ENCODE measurements at regions of chr2 and their contacts with region 1.

Region 1: DNA sequence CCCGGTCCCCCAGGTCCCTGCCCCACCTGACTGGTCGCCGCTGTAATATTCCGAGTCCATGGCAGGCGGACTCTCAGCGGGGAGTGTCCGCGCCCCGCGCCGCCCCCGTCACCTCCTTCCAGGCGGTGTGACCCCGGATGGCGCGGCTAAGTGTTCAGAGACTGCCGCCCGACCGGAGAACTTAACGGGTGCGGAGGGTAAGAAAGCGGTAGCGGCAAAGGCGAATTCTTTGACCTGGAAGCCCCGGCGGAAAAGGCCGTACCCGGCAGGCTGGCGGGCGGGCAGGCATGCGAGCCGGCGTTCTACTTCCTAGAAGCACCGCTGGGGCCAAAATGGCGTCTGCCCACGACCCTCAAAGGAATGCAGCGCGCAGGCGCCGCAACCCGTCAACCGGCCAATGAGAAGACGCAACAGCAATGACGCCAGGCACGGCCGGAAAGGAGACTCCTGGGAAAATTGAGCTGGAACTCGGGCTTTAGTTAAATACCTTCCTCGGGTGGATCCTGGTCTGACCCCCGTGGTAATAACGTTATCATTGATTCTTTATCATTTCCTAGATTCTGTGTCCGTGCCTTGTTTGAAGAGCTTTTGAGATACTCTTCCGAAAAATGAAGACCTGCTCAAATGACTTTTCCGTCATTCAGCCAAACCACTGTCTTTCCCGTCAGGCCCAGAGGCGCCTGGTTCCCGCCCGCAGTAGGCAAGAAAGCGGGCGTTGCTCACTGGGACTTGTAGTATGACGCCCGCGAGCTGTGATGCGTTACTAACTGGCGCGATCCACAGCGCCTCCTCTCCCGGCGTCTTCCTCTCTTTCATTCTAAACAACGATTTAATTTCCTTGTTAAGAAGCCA is at the start of gene IWS1:
- DNase-seq: peak; percentile 88 to 93
- H3K4me3 ChIP-seq: peak within 1 kb of the TSS; percentile 72 to 88 (median 81)
- H3K27ac ChIP-seq: peak within 1 kb of the TSS; percentile 96
- H3K4me1 ChIP-seq: peaks cover 0 to 9% (median 7%) of the 10 kb centered on the region in 4 experiments; a peak in 4 of 7 replicates
- H3K27me3 ChIP-seq: no peaks in the 10 kb centered on the region
- CTCF ChIP-seq: peak in 2 of 3 experiments; percentile 7 to 13; a peak in 1 of 4 replicates
- EP300 ChIP-seq: no peak
- POLR2A ChIP-seq: peak; percentile 79 to 94
- RAD21 ChIP-seq: no peak
- total RNA-seq, gene IWS1: 64.7 and 64.8 TPM in 2 replicates

Region 2: GRCh38 chr2:127516031-127516762 is 10.2 kb before region 1 on chr2:
- CTCF ChIA-PET with region 1: interaction called, 4 read pairs
- POLR2A ChIA-PET with region 1: interaction called, 48 read pairs
- DNase-seq: no peak
- H3K4me3 ChIP-seq: no peak overlapping the region
- H3K27ac ChIP-seq: no peak overlapping the region
- H3K4me1 ChIP-seq: peaks cover 7 to 12% (median 8%) of the 10 kb centered on the region in 4 experiments; a peak in 6 of 7 replicates
- H3K27me3 ChIP-seq: no peaks in the 10 kb centered on the region
- CTCF ChIP-seq: no peak
- EP300 ChIP-seq: no peak
- POLR2A ChIP-seq: no peak
- RAD21 ChIP-seq: no peak

Region 3: GRCh38 chr2:127640082-127641072 is 114.0 kb after region 1 on chr2:
- CTCF ChIA-PET with region 1: no interaction called
- POLR2A ChIA-PET with region 1: interaction called, 10 read pairs
- DNase-seq: peak in 1 of 2 experiments; percentile 75
- H3K4me3 ChIP-seq: no peak overlapping the region
- H3K27ac ChIP-seq: no peak overlapping the region
- H3K4me1 ChIP-seq: peaks cover 0 to 19% (median 7%) of the 10 kb centered on the region in 4 experiments; a peak in 6 of 7 replicates
- H3K27me3 ChIP-seq: no peaks in the 10 kb centered on the region
- CTCF ChIP-seq: peak in 2 of 3 experiments; percentile 61 to 79; a peak in 3 of 4 replicates
- EP300 ChIP-seq: no peak
- POLR2A ChIP-seq: no peak
- RAD21 ChIP-seq: peak; percentile 66 to 73

Measured in H1 (cell line).